ENCODE measurements at regions of chr12 and their contacts with region 1.

Region 1: GRCh38 chr12:45745861-45746277 is 16.4 kb downstream of the ARID2 start:
- DNase-seq: no peak
- H3K4me3 ChIP-seq: no peak overlapping the region
- H3K27ac ChIP-seq: no peak overlapping the region
- H3K4me1 ChIP-seq: peaks cover 35% of the 10 kb centered on the region
- H3K27me3 ChIP-seq: no peaks in the 10 kb centered on the region
- CTCF ChIP-seq: peak; percentile 55

Region 2: DNA sequence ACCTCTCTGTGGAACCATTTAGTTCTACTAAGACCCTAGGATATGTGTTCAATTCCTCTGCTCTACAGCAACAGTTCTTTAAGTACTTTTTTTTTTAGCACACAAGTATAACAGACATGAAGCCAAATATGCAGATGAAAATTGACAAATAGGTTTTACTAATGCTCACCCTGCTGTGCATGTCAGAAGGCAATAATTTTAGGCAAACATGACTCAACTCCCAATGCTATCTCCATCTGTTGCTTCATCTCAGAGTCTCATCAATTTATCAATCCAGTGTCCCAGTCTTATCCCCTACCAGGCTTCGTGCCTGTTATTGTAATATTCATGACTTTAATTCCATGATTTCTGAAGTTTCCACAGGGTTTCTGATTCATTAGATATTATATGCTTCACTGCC is 752.7 kb before region 1 on chr12:
- intact Hi-C with region 1: no loop called
- DNase-seq: no peak
- H3K4me3 ChIP-seq: no peak overlapping the region
- H3K27ac ChIP-seq: no peak overlapping the region
- H3K4me1 ChIP-seq: no peaks in the 10 kb centered on the region
- H3K27me3 ChIP-seq: no peaks in the 10 kb centered on the region
- CTCF ChIP-seq: no peak

Region 3: GRCh38 chr12:45543906-45544315 is 202.0 kb before region 1 on chr12:
- intact Hi-C with region 1: loop called (anchors 10 kb)
- DNase-seq: no peak
- H3K4me3 ChIP-seq: no peak overlapping the region
- H3K27ac ChIP-seq: no peak overlapping the region
- H3K4me1 ChIP-seq: no peaks in the 10 kb centered on the region
- H3K27me3 ChIP-seq: no peaks in the 10 kb centered on the region
- CTCF ChIP-seq: peak; percentile 80

Measured in left ventricle myocardium inferior (tissue), 1 donor.